ENCODE measurements at regions of chr2 and their contacts with region 1.

Region 1: DNA sequence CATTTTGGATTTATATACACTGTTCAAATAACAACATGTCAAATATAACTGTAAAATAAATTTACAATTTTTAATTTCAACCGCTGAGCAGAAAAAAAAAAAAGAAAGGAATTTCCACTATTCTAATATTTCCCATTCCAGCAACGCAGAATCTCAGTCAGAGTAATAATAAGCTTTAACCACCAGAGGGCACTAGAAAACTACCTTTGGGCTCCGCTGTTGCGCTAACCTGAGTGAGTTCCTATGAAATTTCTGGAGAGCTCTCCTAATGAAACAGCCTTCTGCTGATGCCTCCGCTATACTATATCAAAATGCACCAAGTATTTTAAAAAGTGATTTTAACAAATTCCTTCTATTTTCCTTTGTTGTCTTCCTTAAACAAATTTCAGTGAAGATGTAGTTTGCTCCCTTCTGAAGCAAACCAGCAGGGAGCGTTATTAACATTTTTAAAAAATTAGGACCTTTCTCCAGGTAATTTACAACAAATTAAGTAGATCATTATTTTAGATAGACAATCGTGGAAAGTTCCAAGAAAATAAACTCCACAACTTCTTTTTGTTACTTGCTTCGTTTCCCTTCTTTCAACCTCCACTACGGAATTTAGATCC is 23.0 kb downstream of the ERMN start:
- DNase-seq: peak; percentile 72
- H3K4me3 Mint-ChIP-seq: no peak overlapping the region
- H3K27ac Mint-ChIP-seq: no peak overlapping the region
- H3K4me1 Mint-ChIP-seq: no peaks in the 10 kb centered on the region
- H3K27me3 Mint-ChIP-seq: peaks cover 12% of the 10 kb centered on the region
- CTCF ChIP-seq: peak; percentile 67

Region 2: DNA sequence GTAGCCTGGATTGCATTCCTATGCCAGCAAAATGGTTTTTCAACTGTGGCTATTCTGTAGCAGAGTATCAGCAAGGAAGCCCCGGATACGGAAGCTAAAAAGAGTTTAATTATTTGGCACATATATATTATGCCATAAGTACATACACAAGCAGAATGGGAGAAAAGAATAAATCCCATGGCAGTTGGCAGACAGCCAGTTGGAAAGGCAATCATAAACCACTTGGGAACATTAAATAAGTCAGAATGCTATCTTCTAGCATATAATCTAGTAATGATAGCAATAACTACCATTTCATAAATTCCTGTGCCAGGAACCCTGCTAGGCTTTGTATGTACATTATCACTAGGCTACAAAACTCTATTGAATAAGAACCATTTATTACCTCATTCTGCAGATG is 19.1 kb before region 1 on chr2:
- CTCF ChIA-PET with region 1: interaction called, 58 read pairs
- POLR2A ChIA-PET with region 1: no interaction called
- intact Hi-C with region 1: no loop called
- DNase-seq: no peak
- H3K4me3 Mint-ChIP-seq: no peak overlapping the region
- H3K27ac Mint-ChIP-seq: no peak overlapping the region
- H3K4me1 Mint-ChIP-seq: no peaks in the 10 kb centered on the region
- H3K27me3 Mint-ChIP-seq: no peaks in the 10 kb centered on the region
- CTCF ChIP-seq: no peak

Region 3: GRCh38 chr2:157321466-157321865 is 18.9 kb after region 1 on chr2:
- CTCF ChIA-PET with region 1: interaction called, 145 read pairs
- POLR2A ChIA-PET with region 1: interaction called, 3 read pairs
- intact Hi-C with region 1: no loop called
- DNase-seq: no peak
- H3K4me3 Mint-ChIP-seq: no peak overlapping the region
- H3K27ac Mint-ChIP-seq: no peak overlapping the region
- H3K4me1 Mint-ChIP-seq: no peaks in the 10 kb centered on the region
- H3K27me3 Mint-ChIP-seq: no peaks in the 10 kb centered on the region
- CTCF ChIP-seq: no peak

Region 4: GRCh38 chr2:157336137-157337010 is 33.8 kb after region 1 on chr2:
- CTCF ChIA-PET with region 1: interaction called, 145 read pairs
- POLR2A ChIA-PET with region 1: no interaction called
- intact Hi-C with region 1: no loop called
- DNase-seq: peak; percentile 65
- H3K4me3 Mint-ChIP-seq: no peak overlapping the region
- H3K27ac Mint-ChIP-seq: no peak overlapping the region
- H3K4me1 Mint-ChIP-seq: no peaks in the 10 kb centered on the region
- H3K27me3 Mint-ChIP-seq: no peaks in the 10 kb centered on the region
- CTCF ChIP-seq: peak; percentile 68

Region 5: GRCh38 chr2:157375384-157375783 is 72.8 kb after region 1 on chr2:
- CTCF ChIA-PET with region 1: no interaction called
- POLR2A ChIA-PET with region 1: no interaction called
- intact Hi-C with region 1: no loop called
- DNase-seq: no peak
- H3K4me3 Mint-ChIP-seq: no peak overlapping the region
- H3K27ac Mint-ChIP-seq: no peak overlapping the region
- H3K4me1 Mint-ChIP-seq: no peaks in the 10 kb centered on the region
- H3K27me3 Mint-ChIP-seq: no peaks in the 10 kb centered on the region
- CTCF ChIP-seq: no peak

Region 6: GRCh38 chr2:157404363-157404762 is 101.8 kb after region 1 on chr2:
- CTCF ChIA-PET with region 1: no interaction called
- POLR2A ChIA-PET with region 1: no interaction called
- intact Hi-C with region 1: no loop called
- DNase-seq: no peak
- H3K4me3 Mint-ChIP-seq: no peak overlapping the region
- H3K27ac Mint-ChIP-seq: no peak overlapping the region
- H3K4me1 Mint-ChIP-seq: no peaks in the 10 kb centered on the region
- H3K27me3 Mint-ChIP-seq: no peaks in the 10 kb centered on the region
- CTCF ChIP-seq: no peak

Region 7: GRCh38 chr2:157596992-157597681 is 294.5 kb after region 1 on chr2:
- CTCF ChIA-PET with region 1: interaction called, 10 read pairs
- POLR2A ChIA-PET with region 1: no interaction called
- intact Hi-C with region 1: loop called (anchors 1 kb)
- DNase-seq: no peak
- H3K4me3 Mint-ChIP-seq: no peak overlapping the region
- H3K27ac Mint-ChIP-seq: no peak overlapping the region
- H3K4me1 Mint-ChIP-seq: no peaks in the 10 kb centered on the region
- H3K27me3 Mint-ChIP-seq: peaks cover 77% of the 10 kb centered on the region
- CTCF ChIP-seq: no peak

Region 8: GRCh38 chr2:157777427-157777826 is 474.8 kb after region 1 on chr2:
- CTCF ChIA-PET with region 1: interaction called, 10 read pairs
- POLR2A ChIA-PET with region 1: no interaction called
- intact Hi-C with region 1: no loop called
- DNase-seq: peak; percentile 58
- H3K4me3 Mint-ChIP-seq: no peak overlapping the region
- H3K27ac Mint-ChIP-seq: no peak overlapping the region
- H3K4me1 Mint-ChIP-seq: no peaks in the 10 kb centered on the region
- H3K27me3 Mint-ChIP-seq: no peaks in the 10 kb centered on the region
- CTCF ChIP-seq: peak; percentile 54